CD14-positive monocyte (primary cell): ENCODE measurements at regions of chrX and their contacts with region 1.

Region 1: DNA sequence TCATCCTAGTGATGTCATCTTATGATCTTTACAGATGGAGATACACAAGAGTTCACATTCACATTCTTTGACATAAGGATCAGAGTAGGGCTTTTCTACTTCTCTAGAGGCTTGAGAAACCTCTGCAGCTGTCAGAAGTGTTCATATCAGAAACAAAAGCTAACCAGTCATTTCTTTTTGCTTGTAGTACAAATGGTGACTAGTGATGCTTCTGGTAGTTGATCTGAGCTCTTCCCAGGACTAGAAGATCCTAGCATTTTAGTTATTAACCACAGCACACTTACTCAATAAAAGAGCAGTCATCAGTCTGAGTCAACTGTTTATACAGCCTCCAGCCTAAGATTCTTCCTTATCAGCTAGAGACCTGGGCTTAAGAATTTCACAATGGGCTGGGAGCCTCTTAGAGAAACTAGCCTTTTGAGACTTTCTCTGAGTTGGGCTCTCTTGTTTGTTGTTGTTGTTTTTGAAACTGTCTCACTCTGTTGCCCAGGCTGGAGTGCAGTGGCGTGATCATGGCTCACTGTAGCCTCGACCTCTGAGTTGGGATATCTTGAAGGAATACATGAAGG is 84.1 kb downstream of the TMEM164 start:
- DNase-seq: peak; percentile 61 to 86 (median 81)
- H3K4me3 ChIP-seq: peak overlapping the region in 1 of 3 experiments; percentile 33
- H3K4me3 Mint-ChIP-seq: peak overlapping the region in 1 of 2 donors; percentile 57
- H3K27ac ChIP-seq: peak overlapping the region; percentile 89 to 93
- H3K27ac Mint-ChIP-seq: peak overlapping the region; percentile 91 to 99 (median 98)
- H3K4me1 ChIP-seq: peaks cover 49 to 52% of the 10 kb centered on the region in 2 donors
- H3K4me1 Mint-ChIP-seq: peaks cover 47% of the 10 kb centered on the region
- H3K27me3 ChIP-seq: peaks cover 0 to 3% of the 10 kb centered on the region in 2 donors
- H3K27me3 Mint-ChIP-seq: peaks cover 0 to 5% (median 0%) of the 10 kb centered on the region in 3 donors
- CTCF ChIP-seq: no peak

Region 2: DNA sequence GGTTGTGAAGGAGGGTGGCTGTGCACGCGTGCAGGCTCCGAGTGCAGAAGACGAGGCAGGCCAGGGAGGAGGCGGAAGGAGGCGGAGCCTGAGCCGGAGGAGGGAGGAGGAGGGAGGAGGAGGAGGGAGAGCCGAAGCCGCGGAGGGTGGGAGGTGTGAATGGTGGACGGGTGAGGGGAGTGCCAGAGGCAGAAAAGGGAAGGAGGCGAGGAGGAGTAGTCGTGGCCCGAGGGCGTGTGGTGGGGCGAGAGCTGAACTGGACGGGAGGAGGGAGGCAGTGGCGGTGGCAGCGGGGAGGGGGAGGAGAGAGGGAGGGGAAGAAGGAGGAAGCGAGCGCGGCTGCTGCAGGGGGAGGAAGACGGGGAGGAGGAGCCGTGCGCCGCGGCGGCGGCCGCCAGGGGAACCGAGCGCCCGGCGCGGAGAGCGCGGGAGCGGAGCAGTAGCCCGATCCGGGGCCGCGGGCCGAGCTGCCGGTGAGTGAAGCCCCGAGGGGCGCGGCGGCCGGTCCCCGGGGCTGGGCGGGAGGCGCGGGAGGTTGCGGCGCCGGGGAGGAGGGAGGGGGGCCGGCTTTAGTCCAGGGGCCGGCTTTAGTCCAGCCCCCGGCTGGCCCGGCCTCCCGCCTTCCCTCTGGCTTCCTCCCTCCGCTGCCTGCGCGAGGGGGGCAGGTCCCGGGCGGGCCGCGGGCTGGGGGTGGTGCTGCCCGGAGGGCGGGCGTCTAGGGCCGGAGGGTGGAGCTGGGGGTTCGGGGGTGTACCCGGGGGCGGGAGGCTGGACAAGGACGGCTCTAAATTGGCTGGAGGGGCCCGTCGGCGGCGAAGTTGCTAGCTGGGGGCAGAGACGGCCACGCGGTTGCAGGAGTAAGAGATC is 84.5 kb before region 1 on chrX and contains the start of gene TMEM164:
- intact Hi-C with region 1: loop called in 1 of 2 experiments (anchors 10 kb)
- DNase-seq: peak; percentile 69 to 83 (median 82)
- H3K4me3 ChIP-seq: peak within 1 kb of the TSS; percentile 53 to 86 (median 83)
- H3K4me3 Mint-ChIP-seq: peak within 1 kb of the TSS; percentile 90 to 92
- H3K27ac ChIP-seq: peak within 1 kb of the TSS; percentile 77 to 80
- H3K27ac Mint-ChIP-seq: peak within 1 kb of the TSS; percentile 85 to 94 (median 92)
- H3K4me1 ChIP-seq: peaks cover 46 to 48% of the 10 kb centered on the region in 2 donors
- H3K4me1 Mint-ChIP-seq: peaks cover 46% of the 10 kb centered on the region
- H3K27me3 ChIP-seq: no peaks in the 10 kb centered on the region
- H3K27me3 Mint-ChIP-seq: peaks cover 0 to 15% (median 0%) of the 10 kb centered on the region in 3 donors
- CTCF ChIP-seq: no peak
- polyA plus RNA-seq, gene TMEM164: 5.3 to 39.5 (median 7.3) TPM

Region 3: DNA sequence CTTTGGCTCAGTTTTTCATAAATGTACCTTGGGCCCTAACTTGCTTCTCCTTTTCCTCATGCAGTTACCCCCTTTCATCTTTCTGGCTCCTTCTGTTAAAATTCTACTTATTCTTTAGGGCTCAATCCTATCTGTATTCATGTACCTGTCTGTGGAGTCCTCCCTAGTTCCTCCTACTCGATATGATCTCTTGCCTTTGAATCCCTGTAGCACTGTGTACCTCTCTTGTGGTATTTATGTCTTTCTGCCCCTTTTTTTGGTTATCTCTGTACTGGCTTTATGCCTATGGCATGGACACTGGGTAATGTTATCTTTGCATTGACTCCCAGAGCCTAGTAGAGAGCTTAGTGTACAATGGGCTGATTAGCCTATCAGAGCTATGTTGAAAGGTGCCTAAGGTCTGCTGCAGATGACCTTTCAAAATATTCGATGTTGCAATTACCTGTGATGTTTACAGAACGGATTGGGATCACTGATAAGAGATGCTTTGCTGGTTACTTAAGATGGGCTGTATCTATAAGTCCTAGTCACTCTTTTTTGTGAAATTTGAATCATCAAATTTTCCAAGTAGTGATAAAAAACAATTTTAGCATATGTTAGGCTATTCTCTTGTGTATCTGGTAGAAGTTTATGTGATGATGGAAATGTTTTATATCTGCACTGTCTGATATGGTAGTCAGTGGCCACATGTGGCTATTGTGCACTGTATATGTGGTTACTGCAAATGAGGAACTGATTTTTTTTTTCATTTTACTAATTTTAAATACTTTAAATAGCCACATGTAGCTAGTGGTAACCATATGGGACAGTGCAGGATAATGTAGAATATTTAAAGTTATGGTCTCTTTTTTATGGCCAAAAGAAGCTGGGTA is 50.6 kb before region 1 on chrX:
- intact Hi-C with region 1: loop called in 1 of 2 experiments (anchors 10 kb)
- DNase-seq: no peak
- H3K4me3 ChIP-seq: no peak overlapping the region
- H3K4me3 Mint-ChIP-seq: no peak overlapping the region
- H3K27ac ChIP-seq: no peak overlapping the region
- H3K27ac Mint-ChIP-seq: peak overlapping the region in 1 of 7 donors; percentile 54
- H3K4me1 ChIP-seq: peaks cover 15 to 19% of the 10 kb centered on the region in 2 donors
- H3K4me1 Mint-ChIP-seq: peaks cover 49% of the 10 kb centered on the region
- H3K27me3 ChIP-seq: peaks cover 0 to 2% of the 10 kb centered on the region in 2 donors
- H3K27me3 Mint-ChIP-seq: peaks cover 0 to 2% (median 0%) of the 10 kb centered on the region in 3 donors
- CTCF ChIP-seq: no peak

Region 4: DNA sequence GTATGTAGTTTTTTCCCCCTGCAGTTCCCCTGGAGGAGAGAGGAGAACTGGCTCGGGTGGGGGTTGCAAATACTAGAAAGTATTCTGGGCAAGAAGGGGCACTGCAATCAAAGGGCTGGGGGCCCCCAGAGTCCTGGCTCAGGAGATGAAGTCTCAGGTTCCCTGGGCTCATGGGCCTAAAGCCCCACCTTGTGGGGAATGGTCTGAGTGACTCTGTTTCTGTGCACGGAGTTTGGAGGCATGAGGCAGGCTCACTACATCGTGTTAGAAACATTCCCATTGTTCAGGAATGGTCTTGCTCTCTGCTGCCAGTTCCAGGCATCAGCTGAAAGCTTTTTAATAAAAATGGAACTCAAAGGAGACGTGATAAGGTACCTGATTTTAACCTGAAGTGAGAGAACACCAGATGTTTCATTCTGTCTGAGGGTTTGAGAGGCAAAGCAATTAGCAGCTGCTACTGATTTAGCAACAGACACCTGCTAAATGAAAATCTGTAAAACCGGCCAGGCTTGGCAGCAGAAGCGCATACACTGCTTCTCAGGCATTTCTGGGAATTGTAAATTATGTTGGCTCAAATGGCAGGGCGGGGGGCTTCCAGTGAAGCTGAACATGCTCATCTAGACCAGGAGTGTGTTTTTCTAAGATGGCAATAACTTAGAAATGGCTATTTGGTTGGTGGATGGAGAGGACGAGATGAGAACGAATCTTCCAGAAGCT is 38.6 kb after region 1 on chrX:
- intact Hi-C with region 1: no loop called
- DNase-seq: no peak
- H3K4me3 ChIP-seq: no peak overlapping the region
- H3K4me3 Mint-ChIP-seq: no peak overlapping the region
- H3K27ac ChIP-seq: no peak overlapping the region
- H3K27ac Mint-ChIP-seq: peak overlapping the region in 1 of 7 donors; percentile 43
- H3K4me1 ChIP-seq: no peaks in the 10 kb centered on the region
- H3K4me1 Mint-ChIP-seq: peaks cover 19% of the 10 kb centered on the region
- H3K27me3 ChIP-seq: no peaks in the 10 kb centered on the region
- H3K27me3 Mint-ChIP-seq: peaks cover 0 to 4% (median 2%) of the 10 kb centered on the region in 3 donors
- CTCF ChIP-seq: no peak